ENCODE measurements at regions of chr6 and their contacts with region 1.

Region 1: DNA sequence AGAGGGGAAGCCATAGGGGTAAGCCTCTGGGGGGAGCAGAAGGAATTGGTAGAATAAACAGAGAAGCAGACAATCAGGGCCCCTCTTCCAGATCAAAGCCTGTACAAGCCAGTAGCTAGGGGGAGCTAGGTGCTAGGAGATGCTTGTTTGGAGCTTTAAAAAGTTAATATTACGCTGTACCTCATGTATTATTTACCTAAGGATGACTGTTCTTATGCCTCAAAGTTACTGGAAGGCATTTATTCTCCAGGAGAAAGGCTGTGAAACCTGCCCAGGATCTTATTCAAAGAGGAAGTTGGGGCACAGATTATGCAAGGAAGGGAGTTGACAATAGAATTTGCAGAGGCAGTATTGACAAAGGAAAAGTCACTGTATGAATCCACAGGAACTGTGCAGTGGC is 111.8 kb upstream of the SLC35F1 start:
- DNase-seq: peak; percentile 27
- H3K4me3 Mint-ChIP-seq: no peak overlapping the region
- H3K27ac Mint-ChIP-seq: no peak overlapping the region
- H3K4me1 Mint-ChIP-seq: no peaks in the 10 kb centered on the region
- H3K27me3 Mint-ChIP-seq: no peaks in the 10 kb centered on the region
- CTCF ChIP-seq: no peak

Region 2: GRCh38 chr6:117613920-117614560 is 181.2 kb before region 1 on chr6:
- CTCF ChIA-PET with region 1: no interaction called
- intact Hi-C with region 1: no loop called
- DNase-seq: no peak
- H3K4me3 Mint-ChIP-seq: no peak overlapping the region
- H3K27ac Mint-ChIP-seq: no peak overlapping the region
- H3K4me1 Mint-ChIP-seq: peaks cover 8% of the 10 kb centered on the region
- H3K27me3 Mint-ChIP-seq: no peaks in the 10 kb centered on the region
- CTCF ChIP-seq: no peak

Region 3: GRCh38 chr6:117810269-117810668 is 15.0 kb after region 1 on chr6:
- CTCF ChIA-PET with region 1: no interaction called
- intact Hi-C with region 1: loop called (anchors 1 kb)
- DNase-seq: no peak
- H3K4me3 Mint-ChIP-seq: no peak overlapping the region
- H3K27ac Mint-ChIP-seq: no peak overlapping the region
- H3K4me1 Mint-ChIP-seq: no peaks in the 10 kb centered on the region
- H3K27me3 Mint-ChIP-seq: no peaks in the 10 kb centered on the region
- CTCF ChIP-seq: no peak

Region 4: DNA sequence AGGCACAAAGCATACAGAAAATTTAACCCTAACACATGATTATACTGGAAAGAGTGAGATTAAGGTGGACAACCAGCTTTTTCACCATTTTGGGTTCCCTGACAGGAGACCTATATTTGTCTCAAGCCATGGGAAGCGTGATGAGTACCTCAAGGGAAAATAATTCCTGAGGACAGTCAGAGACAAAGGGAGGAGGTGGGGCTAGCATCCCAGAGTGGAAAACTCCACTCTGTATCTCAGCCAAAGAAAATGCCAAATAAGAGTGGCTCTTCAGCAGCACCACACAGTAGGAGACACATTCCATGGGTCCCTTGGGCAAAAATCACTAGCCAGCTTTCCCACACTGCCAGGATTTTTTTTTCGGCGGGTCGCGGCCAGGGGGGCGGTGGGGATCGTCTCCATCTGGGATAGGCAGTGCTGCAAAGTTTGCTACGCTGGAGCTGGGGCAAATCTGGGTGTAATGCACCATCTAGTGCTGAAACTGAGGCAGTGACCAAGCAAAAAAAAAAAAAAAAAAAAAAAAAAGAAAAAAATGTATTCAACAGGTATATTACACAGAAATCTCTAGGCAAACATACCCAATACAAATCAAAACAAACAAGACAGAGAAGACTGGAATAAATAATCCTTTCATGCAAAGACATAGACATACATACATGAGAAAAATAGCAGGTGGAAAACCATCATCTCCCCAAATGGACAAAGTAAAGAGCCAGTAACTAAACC is 34.5 kb after region 1 on chr6:
- CTCF ChIA-PET with region 1: interaction called, 3 read pairs
- intact Hi-C with region 1: loop called (anchors 1 kb)
- DNase-seq: peak; percentile 33
- H3K4me3 Mint-ChIP-seq: peak overlapping the region; percentile 55
- H3K27ac Mint-ChIP-seq: no peak overlapping the region
- H3K4me1 Mint-ChIP-seq: peaks cover 6% of the 10 kb centered on the region
- H3K27me3 Mint-ChIP-seq: no peaks in the 10 kb centered on the region
- CTCF ChIP-seq: no peak

Region 5: DNA sequence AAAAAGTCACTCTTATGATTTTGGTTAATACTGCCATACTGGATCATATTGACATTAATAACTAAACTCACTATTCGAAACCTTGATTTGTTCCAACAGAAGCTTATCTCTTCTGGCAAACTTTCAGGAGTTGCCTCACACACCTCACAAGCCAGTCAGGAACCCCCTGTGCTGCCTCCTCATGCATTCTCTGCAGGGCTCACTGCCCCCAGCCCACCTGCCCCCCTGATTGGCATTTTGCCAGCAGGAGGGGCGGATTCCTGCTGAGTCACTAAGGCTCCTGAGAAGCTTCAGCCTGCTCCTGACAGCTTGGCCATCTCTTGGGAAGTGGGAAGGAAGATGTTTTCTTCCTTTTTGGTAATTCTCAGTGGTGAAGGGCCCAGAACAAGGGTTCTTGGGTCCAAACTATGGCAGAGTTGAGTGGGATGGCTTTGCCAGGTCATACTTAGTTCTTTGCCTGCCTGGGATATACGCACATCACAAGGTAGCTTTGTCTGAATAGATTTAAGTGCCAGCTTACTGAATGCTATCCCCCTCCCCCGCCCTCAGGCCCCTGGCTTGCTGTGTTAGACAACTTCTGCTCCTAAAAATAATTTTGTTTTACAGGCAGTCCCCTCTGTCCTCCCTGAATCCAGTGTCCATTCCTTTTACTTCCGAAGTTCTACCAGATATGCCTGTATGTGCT is 143.2 kb after region 1 on chr6:
- CTCF ChIA-PET with region 1: no interaction called
- intact Hi-C with region 1: no loop called
- DNase-seq: peak; percentile 34
- H3K4me3 Mint-ChIP-seq: no peak overlapping the region
- H3K27ac Mint-ChIP-seq: no peak overlapping the region
- H3K4me1 Mint-ChIP-seq: no peaks in the 10 kb centered on the region
- H3K27me3 Mint-ChIP-seq: no peaks in the 10 kb centered on the region
- CTCF ChIP-seq: no peak

Measured in Calu3 (cell line).